ENCODE measurements at regions of chr20 and their contacts with region 1.

Region 1: GRCh38 chr20:13022401-13023155 is 13.8 kb downstream of the SPTLC3 start:
- DNase-seq: no peak
- H3K4me3 ChIP-seq: no peak overlapping the region
- H3K27ac ChIP-seq: no peak overlapping the region
- H3K4me1 ChIP-seq: no peaks in the 10 kb centered on the region
- H3K27me3 ChIP-seq: no peaks in the 10 kb centered on the region
- CTCF ChIP-seq: no peak
- POLR2A ChIP-seq: no peak

Region 2: DNA sequence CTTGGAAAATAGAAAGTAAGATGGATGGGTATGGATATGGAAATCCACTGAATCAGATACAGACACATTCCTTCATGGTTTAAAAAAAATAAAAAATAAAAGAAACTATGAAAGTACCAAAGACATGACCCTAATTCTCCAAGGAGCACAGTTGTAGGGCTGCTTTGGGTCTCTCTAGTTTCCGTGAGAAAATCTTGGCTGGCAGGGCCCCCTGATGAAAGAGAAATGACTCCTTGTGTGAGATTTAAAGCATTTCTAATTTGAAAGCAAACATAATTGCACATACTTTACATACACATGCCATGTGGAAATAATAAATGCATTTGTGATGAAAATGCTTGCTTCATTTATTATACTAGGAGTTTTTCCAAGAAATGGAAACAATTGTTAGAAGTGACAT is 1698.8 kb before region 1 on chr20:
- intact Hi-C with region 1: loop called (anchors 5 kb)
- DNase-seq: no peak
- H3K4me3 ChIP-seq: no peak overlapping the region
- H3K27ac ChIP-seq: no peak overlapping the region
- H3K4me1 ChIP-seq: no peaks in the 10 kb centered on the region
- H3K27me3 ChIP-seq: no peaks in the 10 kb centered on the region
- CTCF ChIP-seq: no peak
- POLR2A ChIP-seq: no peak